Activated naive CD4-positive, alpha-beta T cell treated with anti-CD3 and anti-CD28 coated beads for 36 hours (primary cell): ENCODE measurements at regions of chr7 and their contacts with region 1.

Region 1: GRCh38 chr7:35037526-35038339 is 448 bp upstream of the DPY19L1 start:
- DNase-seq: peak; percentile 82
- H3K4me3 Mint-ChIP-seq: peak overlapping the region; percentile 80
- H3K27ac Mint-ChIP-seq: peak overlapping the region; percentile 60
- H3K4me1 Mint-ChIP-seq: peaks cover 22% of the 10 kb centered on the region
- H3K27me3 Mint-ChIP-seq: no peaks in the 10 kb centered on the region

Region 2: GRCh38 chr7:34321000-34321581 is 716.6 kb before region 1 on chr7:
- CTCF ChIA-PET with region 1: no interaction called
- intact Hi-C with region 1: loop called (anchors 1 kb)
- DNase-seq: peak; percentile 61
- H3K4me3 Mint-ChIP-seq: no peak overlapping the region
- H3K27ac Mint-ChIP-seq: no peak overlapping the region
- H3K4me1 Mint-ChIP-seq: peaks cover 3% of the 10 kb centered on the region
- H3K27me3 Mint-ChIP-seq: peaks cover 29% of the 10 kb centered on the region

Region 3: DNA sequence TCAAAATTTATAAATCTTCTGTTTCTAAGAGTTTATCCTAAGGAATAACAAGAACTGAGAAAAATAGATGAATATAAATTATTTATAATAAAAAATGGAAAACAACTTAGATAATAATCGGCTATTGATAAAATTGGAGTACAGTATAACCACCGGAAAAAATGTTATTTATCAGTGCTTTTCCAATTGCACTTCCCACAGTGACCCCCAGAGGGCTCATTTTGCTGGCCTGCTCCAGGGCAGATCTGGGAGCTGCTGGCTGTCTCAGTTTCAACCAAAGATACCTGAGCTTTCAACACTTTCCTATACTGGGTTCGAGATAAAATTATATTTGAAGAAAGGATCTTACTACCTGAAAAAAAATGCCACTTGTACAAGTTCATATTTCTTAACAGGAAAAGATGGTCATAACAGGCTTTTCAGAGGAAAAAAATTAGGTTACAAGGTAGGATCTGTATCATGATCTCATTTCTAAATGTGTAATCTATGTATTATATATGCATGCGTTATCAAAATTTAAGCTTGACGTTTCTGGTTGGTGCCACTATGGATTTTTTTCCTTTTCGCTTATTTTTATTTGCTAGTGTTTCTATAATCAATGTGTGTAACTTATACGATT is 214.0 kb before region 1 on chr7:
- CTCF ChIA-PET with region 1: interaction called, 11 read pairs
- intact Hi-C with region 1: loop called (anchors 1 kb)
- DNase-seq: peak; percentile 73
- H3K4me3 Mint-ChIP-seq: no peak overlapping the region
- H3K27ac Mint-ChIP-seq: no peak overlapping the region
- H3K4me1 Mint-ChIP-seq: no peaks in the 10 kb centered on the region
- H3K27me3 Mint-ChIP-seq: peaks cover 4% of the 10 kb centered on the region

Region 4: GRCh38 chr7:35003679-35004303 is 33.9 kb before region 1 on chr7:
- CTCF ChIA-PET with region 1: no interaction called
- intact Hi-C with region 1: no loop called
- DNase-seq: no peak
- H3K4me3 Mint-ChIP-seq: no peak overlapping the region
- H3K27ac Mint-ChIP-seq: no peak overlapping the region
- H3K4me1 Mint-ChIP-seq: no peaks in the 10 kb centered on the region
- H3K27me3 Mint-ChIP-seq: no peaks in the 10 kb centered on the region

Region 5: GRCh38 chr7:35185907-35186731 is 148.4 kb after region 1 on chr7:
- CTCF ChIA-PET with region 1: no interaction called
- intact Hi-C with region 1: loop called (anchors 2 kb)
- DNase-seq: peak; percentile 12
- H3K4me3 Mint-ChIP-seq: peak overlapping the region; percentile 71
- H3K27ac Mint-ChIP-seq: no peak overlapping the region
- H3K4me1 Mint-ChIP-seq: peaks cover 10% of the 10 kb centered on the region
- H3K27me3 Mint-ChIP-seq: peaks cover 25% of the 10 kb centered on the region

Region 6: DNA sequence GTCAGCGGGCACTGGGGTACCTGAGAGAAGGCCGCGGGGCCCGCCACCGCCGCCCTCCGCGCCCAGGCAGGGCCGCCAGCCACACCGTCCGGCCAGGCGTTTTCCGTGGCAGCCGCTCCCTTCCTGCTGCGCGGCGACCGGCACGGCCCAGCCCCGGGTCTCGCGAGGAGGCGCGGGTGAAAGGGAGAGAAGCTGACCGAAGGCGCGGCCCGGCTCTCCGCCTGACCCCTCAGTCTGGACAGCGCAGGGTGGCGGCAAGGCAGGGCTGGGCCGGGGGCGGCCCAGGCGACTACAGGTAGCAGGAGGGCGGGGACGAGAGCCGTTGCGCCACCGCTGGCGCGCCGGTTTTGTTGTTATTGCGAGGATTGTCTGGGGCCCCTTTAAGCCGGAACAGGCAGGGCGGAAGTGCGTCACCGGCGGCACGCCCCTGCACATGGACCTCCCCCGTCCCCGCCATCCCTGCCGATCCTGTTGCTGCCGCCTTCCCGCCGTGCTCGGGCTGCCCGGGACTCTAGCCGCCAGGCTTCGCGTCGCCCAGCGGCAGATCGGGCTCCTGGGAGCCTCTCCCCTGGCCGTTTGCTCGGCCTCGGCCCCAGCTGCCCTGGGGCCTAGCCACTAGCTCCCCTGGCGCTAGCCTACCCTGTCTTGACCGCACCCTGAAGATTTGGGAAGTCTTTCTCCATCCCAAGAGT is 657.2 kb after region 1 on chr7 and contains the start of gene HERPUD2:
- CTCF ChIA-PET with region 1: no interaction called
- intact Hi-C with region 1: loop called (anchors 1 kb)
- DNase-seq: peak; percentile 92
- H3K4me3 Mint-ChIP-seq: peak within 1 kb of the TSS; percentile 94
- H3K27ac Mint-ChIP-seq: peak within 1 kb of the TSS; percentile 96
- H3K4me1 Mint-ChIP-seq: peaks cover 35% of the 10 kb centered on the region
- H3K27me3 Mint-ChIP-seq: no peaks in the 10 kb centered on the region
- total RNA-seq, gene HERPUD2: 20.3 to 22.4 TPM

Region 7: GRCh38 chr7:36152756-36153570 is 1115.2 kb after region 1 on chr7 and contains the start of gene EEPD1:
- CTCF ChIA-PET with region 1: no interaction called
- intact Hi-C with region 1: loop called (anchors 2 kb)
- DNase-seq: peak; percentile 100
- H3K4me3 Mint-ChIP-seq: peak within 1 kb of the TSS; percentile 72
- H3K27ac Mint-ChIP-seq: no peak within 1 kb of the TSS
- H3K4me1 Mint-ChIP-seq: peaks cover 18% of the 10 kb centered on the region
- H3K27me3 Mint-ChIP-seq: no peaks in the 10 kb centered on the region
- total RNA-seq, gene EEPD1: 0.49 to 0.50 TPM